ENCODE measurements at regions of chr11 and their contacts with region 1.

Region 1: GRCh38 chr11:66694732-66695207 is 17.1 kb upstream of the RBM4B start:
- DNase-seq: peak; percentile 93 to 98
- ATAC-seq: peak; percentile 96 to 99
- H3K4me3 ChIP-seq: no peak overlapping the region
- H3K27ac ChIP-seq: peak overlapping the region; percentile 36 to 69; a peak in 3 of 6 replicates
- H3K4me1 ChIP-seq: peaks cover 5% of the 10 kb centered on the region; the same call in 1 of the 3 replicates
- CTCF ChIP-seq: peak; percentile 99
- EP300 ChIP-seq: no peak
- POLR2A ChIP-seq: no peak
- RAD21 ChIP-seq: peak; percentile 96 to 97

Region 2: GRCh38 chr11:66710384-66710927 is 15.7 kb after region 1 on chr11:
- CTCF ChIA-PET with region 1: interaction called, 10 read pairs
- POLR2A ChIA-PET with region 1: no interaction called
- DNase-seq: no peak
- ATAC-seq: no peak
- H3K4me3 ChIP-seq: no peak overlapping the region
- H3K27ac ChIP-seq: no peak overlapping the region
- H3K4me1 ChIP-seq: no peaks in the 10 kb centered on the region
- CTCF ChIP-seq: no peak
- EP300 ChIP-seq: no peak
- POLR2A ChIP-seq: no peak
- RAD21 ChIP-seq: no peak